Esophagus muscularis mucosa (tissue), 4 donors: ENCODE measurements at regions of chr11 and their contacts with region 1.

Region 1: GRCh38 chr11:128422576-128423370 is 164.6 kb downstream of the ETS1 start:
- DNase-seq: no peak
- H3K4me3 ChIP-seq: no peak overlapping the region
- H3K27ac ChIP-seq: peak overlapping the region; percentile 8 to 60 (median 25)
- H3K4me1 ChIP-seq: peaks cover 33 to 47% (median 39%) of the 10 kb centered on the region in 4 donors
- H3K27me3 ChIP-seq: no peaks in the 10 kb centered on the region
- CTCF ChIP-seq: no peak
- EP300 ChIP-seq: no peak
- POLR2A ChIP-seq: no peak

Region 2: GRCh38 chr11:128365044-128365443 is 57.7 kb before region 1 on chr11:
- intact Hi-C with region 1: no loop called
- DNase-seq: no peak
- H3K4me3 ChIP-seq: no peak overlapping the region
- H3K27ac ChIP-seq: no peak overlapping the region
- H3K4me1 ChIP-seq: peaks cover 0 to 20% (median 13%) of the 10 kb centered on the region in 4 donors
- H3K27me3 ChIP-seq: no peaks in the 10 kb centered on the region
- CTCF ChIP-seq: no peak
- EP300 ChIP-seq: no peak
- POLR2A ChIP-seq: no peak

Region 3: GRCh38 chr11:128522055-128522942 is 99.5 kb after region 1 on chr11:
- intact Hi-C with region 1: loop called (anchors 5 kb)
- DNase-seq: peak; percentile 98
- H3K4me3 ChIP-seq: peak overlapping the region; percentile 67 to 88 (median 79)
- H3K27ac ChIP-seq: peak overlapping the region; percentile 91 to 97 (median 93)
- H3K4me1 ChIP-seq: peaks cover 37 to 70% (median 53%) of the 10 kb centered on the region in 4 donors
- H3K27me3 ChIP-seq: no peaks in the 10 kb centered on the region
- CTCF ChIP-seq: no peak
- EP300 ChIP-seq: peak; percentile 1
- POLR2A ChIP-seq: peak; percentile 89